Caco-2 (cell line): ENCODE measurements at regions of chr17 and their contacts with region 1.

Region 1: GRCh38 chr17:40317880-40318829 is 9.2 kb downstream of the RARA start:
- DNase-seq: peak; percentile 96
- H3K4me3 ChIP-seq: peak overlapping the region; percentile 94
- H3K4me3 Mint-ChIP-seq: peak overlapping the region; percentile 92
- H3K27ac Mint-ChIP-seq: peak overlapping the region; percentile 83
- H3K4me1 ChIP-seq: peaks cover 19% of the 10 kb centered on the region
- H3K4me1 Mint-ChIP-seq: peaks cover 30% of the 10 kb centered on the region
- H3K27me3 ChIP-seq: no peaks in the 10 kb centered on the region
- H3K27me3 Mint-ChIP-seq: no peaks in the 10 kb centered on the region
- CTCF ChIP-seq: no peak

Region 2: GRCh38 chr17:40303009-40303657 is 15.0 kb before region 1 on chr17:
- CTCF ChIA-PET with region 1: interaction called, 27 read pairs
- POLR2A ChIA-PET with region 1: interaction called, 13 read pairs
- intact Hi-C with region 1: loop called (anchors 1 kb)
- DNase-seq: peak in 1 of 2 experiments; percentile 71
- H3K4me3 ChIP-seq: no peak overlapping the region
- H3K4me3 Mint-ChIP-seq: no peak overlapping the region
- H3K27ac Mint-ChIP-seq: peak overlapping the region; percentile 29
- H3K4me1 ChIP-seq: peaks cover 20% of the 10 kb centered on the region
- H3K4me1 Mint-ChIP-seq: peaks cover 16% of the 10 kb centered on the region
- H3K27me3 ChIP-seq: no peaks in the 10 kb centered on the region
- H3K27me3 Mint-ChIP-seq: no peaks in the 10 kb centered on the region
- CTCF ChIP-seq: peak; percentile 67 to 71

Region 3: GRCh38 chr17:40340880-40341807 is 23.0 kb after region 1 on chr17:
- CTCF ChIA-PET with region 1: interaction called, 40 read pairs
- POLR2A ChIA-PET with region 1: interaction called, 36 read pairs
- intact Hi-C with region 1: loop called (anchors 1 kb)
- DNase-seq: peak; percentile 92 to 93
- H3K4me3 ChIP-seq: peak overlapping the region; percentile 80
- H3K4me3 Mint-ChIP-seq: peak overlapping the region; percentile 89
- H3K27ac Mint-ChIP-seq: peak overlapping the region; percentile 50
- H3K4me1 ChIP-seq: peaks cover 34% of the 10 kb centered on the region
- H3K4me1 Mint-ChIP-seq: peaks cover 27% of the 10 kb centered on the region
- H3K27me3 ChIP-seq: no peaks in the 10 kb centered on the region
- H3K27me3 Mint-ChIP-seq: no peaks in the 10 kb centered on the region
- CTCF ChIP-seq: peak in 1 of 2 experiments; percentile 15

Region 4: GRCh38 chr17:40355123-40355803 is 37.1 kb after region 1 on chr17:
- CTCF ChIA-PET with region 1: interaction called, 19 read pairs
- POLR2A ChIA-PET with region 1: no interaction called
- intact Hi-C with region 1: loop called (anchors 1 kb)
- DNase-seq: peak; percentile 72 to 90
- H3K4me3 ChIP-seq: no peak overlapping the region
- H3K4me3 Mint-ChIP-seq: no peak overlapping the region
- H3K27ac Mint-ChIP-seq: no peak overlapping the region
- H3K4me1 ChIP-seq: no peaks in the 10 kb centered on the region
- H3K4me1 Mint-ChIP-seq: peaks cover 8% of the 10 kb centered on the region
- H3K27me3 ChIP-seq: no peaks in the 10 kb centered on the region
- H3K27me3 Mint-ChIP-seq: no peaks in the 10 kb centered on the region
- CTCF ChIP-seq: peak; percentile 93 to 96